Gastrocnemius medialis (tissue), 4 donors: ENCODE measurements at regions of chr1 and their contacts with region 1.

Region 1: GRCh38 chr1:170929835-170930554 is 5.3 kb upstream of the MROH9 start:
- DNase-seq: no peak
- ATAC-seq: peak; percentile 87 to 92
- H3K4me3 ChIP-seq: no peak overlapping the region
- H3K27ac ChIP-seq: no peak overlapping the region
- H3K4me1 ChIP-seq: no peaks in the 10 kb centered on the region
- H3K27me3 ChIP-seq: no peaks in the 10 kb centered on the region
- CTCF ChIP-seq: peak in 4 of 5 experiments; percentile 35 to 76 (median 64)
- POLR2A ChIP-seq: no peak

Region 2: DNA sequence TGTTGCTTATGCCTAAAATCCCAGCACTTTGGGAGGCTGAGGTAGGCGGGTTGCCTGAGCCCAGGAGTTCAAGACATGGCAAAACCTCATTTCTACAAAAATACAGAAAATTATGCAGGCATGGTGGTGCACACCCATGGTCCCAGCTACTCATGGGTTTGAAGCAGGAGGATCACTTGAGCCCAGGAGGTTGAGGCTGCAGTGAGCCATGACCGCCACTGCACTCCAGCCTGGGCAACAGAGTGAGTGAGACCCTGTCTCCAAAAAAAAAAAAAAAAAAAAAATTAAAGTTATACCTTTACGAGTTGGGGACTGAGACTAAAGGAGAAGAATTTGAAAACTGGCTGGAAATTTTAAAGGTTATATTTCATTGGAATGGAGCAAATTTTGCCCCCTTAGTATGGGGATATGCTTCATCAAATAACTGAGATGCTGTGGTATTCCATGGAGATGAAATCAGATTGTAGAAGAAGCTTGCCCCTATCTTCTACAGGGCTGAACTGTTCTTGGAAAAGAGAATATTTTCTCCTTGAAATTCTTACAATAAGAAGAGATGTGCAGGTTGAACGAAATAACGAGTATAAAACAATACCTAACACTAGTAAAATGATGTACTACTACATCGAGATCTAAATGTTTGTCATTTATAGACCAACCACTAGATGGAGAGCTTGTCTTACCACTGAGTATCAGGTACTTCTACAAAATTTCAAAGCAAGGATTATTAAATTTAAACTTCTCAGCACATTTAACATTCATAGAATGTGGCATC is 1001.4 kb before region 1 on chr1:
- in situ Hi-C with region 1: loop called in 2 of 4 experiments (anchors 10 to 25 kb)
- intact Hi-C with region 1: loop called (anchors 2 kb)
- DNase-seq: no peak
- ATAC-seq: peak in 1 of 2 donors; percentile 33
- H3K4me3 ChIP-seq: no peak overlapping the region
- H3K27ac ChIP-seq: no peak overlapping the region
- H3K4me1 ChIP-seq: peaks cover 0 to 6% of the 10 kb centered on the region in 2 donors
- H3K27me3 ChIP-seq: no peaks in the 10 kb centered on the region
- CTCF ChIP-seq: peak; percentile 29 to 72 (median 60)
- POLR2A ChIP-seq: no peak

Region 3: DNA sequence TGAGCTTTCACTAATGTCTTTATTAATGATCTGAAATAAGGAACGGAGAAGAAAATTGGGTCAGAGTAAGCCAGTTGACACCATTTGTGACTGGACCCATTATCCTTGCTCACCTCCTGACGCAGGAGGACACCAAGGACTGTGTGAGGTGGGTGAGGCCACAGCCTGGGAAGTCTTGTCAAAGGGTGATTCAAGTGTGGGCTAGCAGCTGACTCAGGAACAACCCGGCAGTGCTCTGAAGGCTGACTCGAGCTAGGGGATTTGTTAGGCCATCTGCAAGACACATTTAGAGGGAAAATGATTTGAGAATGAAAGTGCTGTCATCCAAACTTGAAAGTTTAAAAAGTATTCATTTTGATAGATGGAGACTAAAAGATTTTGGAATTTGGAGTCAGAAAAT is 244.8 kb before region 1 on chr1:
- in situ Hi-C with region 1: no loop called
- intact Hi-C with region 1: loop called (anchors 5 kb)
- DNase-seq: peak in 1 of 2 donors; percentile 40
- ATAC-seq: peak in 1 of 2 donors; percentile 26
- H3K4me3 ChIP-seq: no peak overlapping the region
- H3K27ac ChIP-seq: peak overlapping the region; percentile 73 to 95 (median 86)
- H3K4me1 ChIP-seq: peaks cover 57 to 58% of the 10 kb centered on the region in 2 donors
- H3K27me3 ChIP-seq: no peaks in the 10 kb centered on the region
- CTCF ChIP-seq: no peak
- POLR2A ChIP-seq: no peak